ENCODE measurements at regions of chr15 and their contacts with region 1.

Region 1: GRCh38 chr15:90560229-90560776 is 30.6 kb downstream of the CRTC3 start:
- DNase-seq: no peak
- H3K4me3 Mint-ChIP-seq: no peak overlapping the region
- H3K27ac Mint-ChIP-seq: no peak overlapping the region
- H3K4me1 Mint-ChIP-seq: peaks cover 84% of the 10 kb centered on the region
- H3K27me3 Mint-ChIP-seq: no peaks in the 10 kb centered on the region

Region 2: GRCh38 chr15:89576417-89576773 is 983.9 kb before region 1 on chr15:
- CTCF ChIA-PET with region 1: no interaction called
- intact Hi-C with region 1: no loop called
- DNase-seq: no peak
- H3K4me3 Mint-ChIP-seq: peak overlapping the region; percentile 86
- H3K27ac Mint-ChIP-seq: no peak overlapping the region
- H3K4me1 Mint-ChIP-seq: peaks cover 18% of the 10 kb centered on the region
- H3K27me3 Mint-ChIP-seq: peaks cover 2% of the 10 kb centered on the region

Region 3: GRCh38 chr15:90191794-90192509 is 368.4 kb before region 1 on chr15:
- CTCF ChIA-PET with region 1: no interaction called
- intact Hi-C with region 1: no loop called
- DNase-seq: peak; percentile 59
- H3K4me3 Mint-ChIP-seq: peak overlapping the region; percentile 61
- H3K27ac Mint-ChIP-seq: no peak overlapping the region
- H3K4me1 Mint-ChIP-seq: peaks cover 22% of the 10 kb centered on the region
- H3K27me3 Mint-ChIP-seq: no peaks in the 10 kb centered on the region

Region 4: GRCh38 chr15:90539789-90540188 is 20.5 kb before region 1 on chr15:
- CTCF ChIA-PET with region 1: interaction called, 10 read pairs
- intact Hi-C with region 1: no loop called
- DNase-seq: peak; percentile 79
- H3K4me3 Mint-ChIP-seq: peak overlapping the region; percentile 68
- H3K27ac Mint-ChIP-seq: peak overlapping the region; percentile 97
- H3K4me1 Mint-ChIP-seq: peaks cover 81% of the 10 kb centered on the region
- H3K27me3 Mint-ChIP-seq: no peaks in the 10 kb centered on the region

Region 5: DNA sequence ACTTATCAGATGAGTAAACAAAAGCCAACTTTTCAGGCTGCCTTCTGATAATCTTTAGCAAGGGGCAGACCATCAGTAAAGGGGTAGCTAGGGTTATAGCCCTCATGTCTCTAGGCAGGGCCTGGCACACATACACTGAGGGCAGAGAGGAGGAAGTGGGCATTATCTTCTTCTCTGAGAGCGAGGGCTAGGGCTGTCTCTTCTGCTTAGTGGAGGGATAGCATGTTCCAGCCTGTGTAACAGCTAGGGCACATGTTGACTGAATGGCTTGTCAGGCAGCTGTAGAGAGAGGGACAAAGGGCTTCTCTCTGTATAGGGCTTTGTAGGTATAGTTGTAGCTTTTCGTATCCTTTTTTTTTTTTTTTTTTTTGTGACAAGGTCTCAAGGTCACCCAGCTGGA is 12.8 kb before region 1 on chr15:
- CTCF ChIA-PET with region 1: interaction called, 3 read pairs
- intact Hi-C with region 1: loop called (anchors 2 kb)
- DNase-seq: no peak
- H3K4me3 Mint-ChIP-seq: no peak overlapping the region
- H3K27ac Mint-ChIP-seq: peak overlapping the region; percentile 33
- H3K4me1 Mint-ChIP-seq: peaks cover 70% of the 10 kb centered on the region
- H3K27me3 Mint-ChIP-seq: no peaks in the 10 kb centered on the region

Region 6: GRCh38 chr15:90571063-90571541 is 10.8 kb after region 1 on chr15:
- CTCF ChIA-PET with region 1: interaction called, 6 read pairs
- intact Hi-C with region 1: loop called (anchors 1 kb)
- DNase-seq: no peak
- H3K4me3 Mint-ChIP-seq: no peak overlapping the region
- H3K27ac Mint-ChIP-seq: peak overlapping the region; percentile 69
- H3K4me1 Mint-ChIP-seq: peaks cover 85% of the 10 kb centered on the region
- H3K27me3 Mint-ChIP-seq: no peaks in the 10 kb centered on the region

Region 7: DNA sequence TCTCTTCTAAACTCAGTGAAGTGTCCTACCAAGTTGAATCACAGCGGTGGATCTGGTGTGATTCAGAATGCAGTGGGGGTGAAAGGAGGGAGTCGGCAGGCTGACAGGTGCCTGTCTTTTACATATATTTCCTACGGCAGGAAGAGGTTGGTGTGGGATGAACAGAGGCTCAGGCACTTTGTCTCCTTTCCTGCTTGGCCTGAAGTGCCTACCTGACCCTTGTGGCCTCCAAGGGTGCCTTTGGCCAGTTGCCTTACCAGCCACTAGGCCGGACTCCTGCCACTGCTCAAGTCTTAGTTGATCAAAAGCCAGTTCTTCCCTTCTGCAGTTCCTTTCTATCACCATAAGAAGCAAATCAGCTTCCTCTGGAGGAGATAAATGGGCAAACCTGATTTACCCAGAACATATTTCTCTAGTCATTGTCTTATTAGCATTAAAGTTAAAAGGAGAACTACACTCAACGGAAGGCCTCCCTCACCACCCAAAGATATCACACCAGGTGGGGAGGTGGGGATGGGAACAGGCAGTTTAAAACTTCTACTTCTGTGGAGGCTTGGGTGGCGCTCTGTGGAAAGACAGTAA is 21.6 kb after region 1 on chr15:
- CTCF ChIA-PET with region 1: interaction called, 7 read pairs
- intact Hi-C with region 1: loop called (anchors 2 kb)
- DNase-seq: peak; percentile 77
- H3K4me3 Mint-ChIP-seq: peak overlapping the region; percentile 20
- H3K27ac Mint-ChIP-seq: peak overlapping the region; percentile 76
- H3K4me1 Mint-ChIP-seq: peaks cover 66% of the 10 kb centered on the region
- H3K27me3 Mint-ChIP-seq: no peaks in the 10 kb centered on the region

Region 8: GRCh38 chr15:90686435-90687218 is 126.3 kb after region 1 on chr15:
- CTCF ChIA-PET with region 1: no interaction called
- intact Hi-C with region 1: loop called (anchors 10 kb)
- DNase-seq: peak; percentile 65
- H3K4me3 Mint-ChIP-seq: no peak overlapping the region
- H3K27ac Mint-ChIP-seq: peak overlapping the region; percentile 92
- H3K4me1 Mint-ChIP-seq: peaks cover 24% of the 10 kb centered on the region
- H3K27me3 Mint-ChIP-seq: no peaks in the 10 kb centered on the region

Region 9: DNA sequence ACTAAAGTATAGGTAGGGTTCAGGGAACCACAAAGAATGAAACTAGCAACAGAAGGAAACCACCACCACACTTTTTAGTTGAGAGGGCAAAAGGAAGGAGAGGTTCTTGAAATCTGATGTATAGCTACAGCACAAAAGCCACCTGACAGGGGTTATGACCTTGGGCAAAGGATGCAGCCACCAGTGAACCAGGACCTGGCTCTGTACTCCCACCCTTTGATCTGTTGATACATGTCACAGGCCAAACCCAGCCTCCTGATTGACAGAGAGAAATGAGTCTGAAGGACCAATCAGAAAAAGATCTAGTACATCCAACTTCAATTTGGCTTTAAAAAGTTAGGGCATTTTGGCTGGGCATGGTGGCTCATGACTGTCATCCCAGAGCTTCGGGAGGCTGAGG is 136.9 kb after region 1 on chr15:
- CTCF ChIA-PET with region 1: no interaction called
- intact Hi-C with region 1: no loop called
- DNase-seq: peak; percentile 38
- H3K4me3 Mint-ChIP-seq: no peak overlapping the region
- H3K27ac Mint-ChIP-seq: no peak overlapping the region
- H3K4me1 Mint-ChIP-seq: peaks cover 5% of the 10 kb centered on the region
- H3K27me3 Mint-ChIP-seq: no peaks in the 10 kb centered on the region